MCF 10A (cell line): ENCODE measurements at regions of chr11 and their contacts with region 1.

Region 1: GRCh38 chr11:95453616-95454171 is 222.7 kb upstream of the SESN3 start:
- DNase-seq: peak; percentile 45
- H3K4me3 Mint-ChIP-seq: no peak overlapping the region
- H3K27ac Mint-ChIP-seq: no peak overlapping the region
- H3K4me1 Mint-ChIP-seq: peaks cover 14% of the 10 kb centered on the region
- H3K27me3 Mint-ChIP-seq: no peaks in the 10 kb centered on the region
- CTCF ChIP-seq: no peak

Region 2: GRCh38 chr11:95443386-95443785 is 10.3 kb before region 1 on chr11:
- CTCF ChIA-PET with region 1: interaction called, 6 read pairs
- POLR2A ChIA-PET with region 1: interaction called, 15 read pairs
- intact Hi-C with region 1: no loop called
- DNase-seq: no peak
- H3K4me3 Mint-ChIP-seq: no peak overlapping the region
- H3K27ac Mint-ChIP-seq: no peak overlapping the region
- H3K4me1 Mint-ChIP-seq: no peaks in the 10 kb centered on the region
- H3K27me3 Mint-ChIP-seq: no peaks in the 10 kb centered on the region
- CTCF ChIP-seq: no peak

Region 3: DNA sequence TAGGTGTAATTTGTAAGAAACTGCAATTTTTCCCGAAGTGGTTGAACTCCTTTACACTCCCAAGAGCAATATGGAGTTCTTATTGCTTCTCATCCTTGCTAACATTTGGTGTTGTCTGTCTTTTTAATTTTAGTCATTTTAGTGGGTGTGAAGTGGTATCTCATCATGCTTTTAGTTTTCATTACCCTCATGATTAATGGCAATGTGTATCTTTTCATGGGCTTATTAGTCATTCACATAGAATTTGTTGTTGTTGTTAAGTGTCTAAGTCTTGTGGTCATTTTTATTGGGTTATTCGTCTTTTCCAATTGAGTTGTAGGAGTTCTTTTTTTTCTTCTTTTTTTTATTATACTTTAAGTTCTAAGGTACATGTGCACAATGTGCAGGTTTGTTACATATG is 15.6 kb after region 1 on chr11:
- CTCF ChIA-PET with region 1: no interaction called
- POLR2A ChIA-PET with region 1: no interaction called
- intact Hi-C with region 1: no loop called
- DNase-seq: no peak
- H3K4me3 Mint-ChIP-seq: no peak overlapping the region
- H3K27ac Mint-ChIP-seq: no peak overlapping the region
- H3K4me1 Mint-ChIP-seq: no peaks in the 10 kb centered on the region
- H3K27me3 Mint-ChIP-seq: no peaks in the 10 kb centered on the region
- CTCF ChIP-seq: no peak